ENCODE measurements at regions of chr5 and their contacts with region 1.

Region 1: GRCh38 chr5:94968507-94969095 is 316.3 kb downstream of the MCTP1 start:
- DNase-seq: no peak
- H3K4me3 ChIP-seq: no peak overlapping the region
- H3K27ac ChIP-seq: no peak overlapping the region
- H3K4me1 ChIP-seq: no peaks in the 10 kb centered on the region
- H3K27me3 ChIP-seq: no peaks in the 10 kb centered on the region
- CTCF ChIP-seq: peak; percentile 49 to 64 (median 59)
- EP300 ChIP-seq: no peak
- POLR2A ChIP-seq: no peak

Region 2: DNA sequence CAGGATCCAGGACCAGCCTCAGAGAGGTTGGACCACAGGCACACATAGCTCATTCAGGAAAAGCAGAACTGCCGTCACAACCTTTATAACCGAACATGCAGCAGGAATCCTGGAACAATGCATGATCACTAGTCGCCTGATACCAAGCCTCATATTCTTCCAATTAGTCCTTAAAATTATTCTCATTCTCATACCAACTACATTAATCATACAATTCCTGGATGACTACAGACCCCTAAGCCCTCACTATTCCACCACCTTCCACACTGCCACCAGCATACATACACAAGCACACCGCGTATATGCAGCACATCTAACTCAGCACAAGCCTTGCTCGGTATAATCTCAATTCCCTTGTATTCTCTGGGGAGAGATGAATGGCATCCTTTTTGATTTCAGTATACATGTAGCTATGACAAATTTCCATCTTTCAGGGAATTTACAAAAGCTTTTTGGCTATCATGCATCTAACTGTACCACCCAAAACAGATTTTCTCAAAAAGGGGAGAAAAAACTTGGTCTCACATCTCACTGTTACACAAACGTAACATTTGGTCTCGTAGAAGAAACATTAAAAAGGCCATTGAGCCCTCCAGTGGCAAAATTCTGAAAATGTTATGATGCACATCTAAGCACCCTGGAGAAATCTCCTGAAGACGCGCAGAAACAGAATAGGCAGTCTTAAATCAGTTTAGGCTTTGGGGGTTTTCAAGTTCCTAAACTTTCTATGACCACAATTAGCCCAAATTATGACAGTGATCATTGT is 270.1 kb after region 1 on chr5:
- in situ Hi-C with region 1: loop called in 2 of 4 experiments (anchors 25 kb)
- intact Hi-C with region 1: loop called (anchors 10 kb)
- DNase-seq: no peak
- H3K4me3 ChIP-seq: no peak overlapping the region
- H3K27ac ChIP-seq: no peak overlapping the region
- H3K4me1 ChIP-seq: no peaks in the 10 kb centered on the region
- H3K27me3 ChIP-seq: no peaks in the 10 kb centered on the region
- CTCF ChIP-seq: no peak
- EP300 ChIP-seq: no peak
- POLR2A ChIP-seq: no peak

Region 3: DNA sequence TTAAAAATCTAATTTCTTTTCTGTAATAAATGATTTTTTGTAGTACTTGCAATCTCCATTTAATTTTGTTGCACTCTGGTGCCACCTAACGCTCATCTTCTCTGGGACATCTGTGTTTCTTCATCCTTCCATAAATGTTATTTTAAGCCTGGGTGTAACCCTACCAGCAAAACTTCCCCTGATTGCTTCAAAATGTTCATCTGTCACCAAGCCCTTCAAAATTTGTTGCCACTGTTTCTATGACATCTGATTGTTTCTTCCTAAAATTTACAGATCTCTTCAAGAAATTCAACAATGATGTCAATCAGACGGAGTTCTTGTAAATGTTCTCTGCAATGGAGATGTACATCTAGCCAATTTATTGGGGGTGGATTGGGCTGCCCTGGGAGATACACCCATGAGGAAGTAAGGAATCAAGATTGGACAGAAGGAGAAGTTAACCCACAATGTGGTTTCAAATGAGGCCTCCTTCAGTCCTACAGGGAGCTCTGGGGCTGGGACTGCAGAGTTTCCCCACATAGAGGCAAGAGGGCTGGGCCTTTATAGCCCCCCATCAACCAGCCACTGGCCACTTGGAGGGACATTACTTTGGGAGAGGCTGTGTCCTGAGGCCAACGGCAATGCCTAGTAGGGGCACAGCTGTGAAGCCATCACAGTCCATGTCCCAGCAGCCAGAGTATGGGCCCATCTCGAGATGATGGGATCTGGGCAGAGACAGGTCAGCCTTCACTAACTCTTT is 293.0 kb after region 1 on chr5:
- in situ Hi-C with region 1: loop called in 1 of 4 experiments (anchors 25 kb)
- intact Hi-C with region 1: no loop called
- DNase-seq: no peak
- H3K4me3 ChIP-seq: no peak overlapping the region
- H3K27ac ChIP-seq: no peak overlapping the region
- H3K4me1 ChIP-seq: no peaks in the 10 kb centered on the region
- H3K27me3 ChIP-seq: no peaks in the 10 kb centered on the region
- CTCF ChIP-seq: peak in 3 of 5 experiments; percentile 7 to 16 (median 14)
- EP300 ChIP-seq: no peak
- POLR2A ChIP-seq: no peak

Measured in transverse colon (tissue), 4 donors.